Activated CD4-positive, alpha-beta memory T cell treated with anti-CD3 and anti-CD28 coated beads for 36 hours (primary cell): ENCODE measurements at regions of chr4 and their contacts with region 1.

Region 1: GRCh38 chr4:165190591-165191347 is 16.6 kb upstream of the KLHL2 start:
- DNase-seq: peak; percentile 63
- H3K4me3 Mint-ChIP-seq: no peak overlapping the region
- H3K27ac Mint-ChIP-seq: peak overlapping the region; percentile 58
- H3K4me1 Mint-ChIP-seq: peaks cover 26% of the 10 kb centered on the region
- H3K27me3 Mint-ChIP-seq: no peaks in the 10 kb centered on the region

Region 2: DNA sequence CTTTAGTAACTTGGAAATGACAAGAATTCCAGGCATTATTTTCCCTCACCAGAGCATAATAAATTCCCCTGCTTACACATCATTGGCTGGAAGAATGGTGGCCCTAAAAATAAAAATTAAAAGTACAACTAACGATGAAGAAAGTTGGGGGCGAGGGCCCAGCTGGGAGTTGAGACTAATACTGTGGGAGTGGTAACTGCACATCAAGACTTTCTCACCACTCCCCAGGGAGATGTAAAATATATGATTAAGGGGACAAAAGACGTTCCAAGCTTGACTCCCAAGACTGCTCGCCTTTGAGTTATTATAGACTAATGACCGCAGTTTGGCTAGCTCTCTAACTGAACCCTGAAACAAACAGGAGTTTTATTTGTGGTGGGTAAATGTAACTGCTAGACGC is 406.8 kb before region 1 on chr4:
- CTCF ChIA-PET with region 1: no interaction called
- POLR2A ChIA-PET with region 1: no interaction called
- intact Hi-C with region 1: no loop called
- DNase-seq: no peak
- H3K4me3 Mint-ChIP-seq: no peak overlapping the region
- H3K27ac Mint-ChIP-seq: no peak overlapping the region
- H3K4me1 Mint-ChIP-seq: no peaks in the 10 kb centered on the region
- H3K27me3 Mint-ChIP-seq: no peaks in the 10 kb centered on the region

Region 3: GRCh38 chr4:165152527-165152926 is 38.2 kb before region 1 on chr4:
- CTCF ChIA-PET with region 1: no interaction called
- POLR2A ChIA-PET with region 1: no interaction called
- intact Hi-C with region 1: no loop called
- DNase-seq: no peak
- H3K4me3 Mint-ChIP-seq: no peak overlapping the region
- H3K27ac Mint-ChIP-seq: no peak overlapping the region
- H3K4me1 Mint-ChIP-seq: no peaks in the 10 kb centered on the region
- H3K27me3 Mint-ChIP-seq: peaks cover 26% of the 10 kb centered on the region

Region 4: DNA sequence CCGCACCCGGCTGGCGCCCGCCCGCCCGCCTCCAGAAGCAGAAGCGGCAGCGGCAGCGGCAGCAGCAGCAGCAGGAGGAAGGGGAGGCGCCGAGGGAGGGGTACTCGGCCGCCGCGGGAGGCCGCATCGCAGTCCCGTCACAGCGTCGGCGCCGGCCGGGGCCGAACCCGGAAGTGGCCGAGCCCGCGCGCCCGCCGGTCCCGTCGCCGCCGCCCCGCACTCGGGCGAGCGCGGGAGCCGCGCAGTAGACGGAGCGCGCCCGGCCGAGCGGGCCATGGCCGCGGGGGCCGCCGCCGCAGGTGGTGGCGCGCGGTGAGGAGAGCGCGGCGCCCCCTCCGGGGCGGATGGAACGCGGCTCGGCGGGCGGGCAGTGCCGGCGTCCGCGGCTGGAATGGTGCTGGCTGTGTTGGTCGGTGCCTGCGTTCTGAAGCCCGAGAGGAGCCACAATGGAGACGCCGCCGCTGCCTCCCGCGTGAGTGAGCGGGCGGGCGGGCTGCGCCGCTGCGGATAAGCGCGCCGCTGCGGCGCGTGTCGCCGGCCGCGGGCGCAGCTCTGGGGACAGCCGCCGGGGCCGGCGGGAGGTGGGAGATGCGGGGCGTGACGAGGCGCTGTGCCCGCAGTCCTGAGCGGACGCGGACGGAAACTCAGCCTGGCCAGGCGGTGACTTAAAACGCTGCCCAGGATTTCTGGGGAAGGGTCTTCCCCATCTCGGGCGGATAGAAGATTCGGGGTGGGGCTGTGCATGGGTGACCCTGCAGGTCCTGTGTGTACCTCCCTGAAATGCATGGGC is 16.9 kb after region 1 on chr4 and contains the start of gene KLHL2:
- CTCF ChIA-PET with region 1: no interaction called
- POLR2A ChIA-PET with region 1: interaction called, 7 read pairs
- intact Hi-C with region 1: loop called (anchors 1 kb)
- DNase-seq: peak; percentile 74
- H3K4me3 Mint-ChIP-seq: peak within 1 kb of the TSS; percentile 88
- H3K27ac Mint-ChIP-seq: peak within 1 kb of the TSS; percentile 86
- H3K4me1 Mint-ChIP-seq: peaks cover 65% of the 10 kb centered on the region
- H3K27me3 Mint-ChIP-seq: no peaks in the 10 kb centered on the region
- total RNA-seq, gene KLHL2: 25.0 to 26.0 TPM

Region 5: DNA sequence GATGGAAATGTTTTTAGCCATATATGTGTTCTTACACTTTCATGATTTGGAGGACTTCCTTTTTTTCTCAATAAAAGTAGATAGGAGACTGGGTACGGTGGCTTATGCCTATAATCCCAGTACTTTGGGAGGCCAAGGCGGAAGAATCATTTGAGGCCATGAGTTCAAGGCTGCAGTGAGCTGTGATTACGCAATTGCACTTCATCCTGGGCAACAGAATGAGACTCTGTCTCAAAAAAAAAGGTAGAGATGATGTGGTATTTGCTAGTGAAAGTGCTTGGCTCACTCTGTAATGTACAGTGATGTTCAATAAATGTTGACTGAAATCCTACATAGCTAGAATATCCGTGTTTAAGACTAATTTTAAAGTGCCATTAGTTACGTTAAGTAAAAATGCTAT is 44.0 kb after region 1 on chr4:
- CTCF ChIA-PET with region 1: no interaction called
- POLR2A ChIA-PET with region 1: no interaction called
- intact Hi-C with region 1: loop called (anchors 5 kb)
- DNase-seq: no peak
- H3K4me3 Mint-ChIP-seq: no peak overlapping the region
- H3K27ac Mint-ChIP-seq: no peak overlapping the region
- H3K4me1 Mint-ChIP-seq: peaks cover 19% of the 10 kb centered on the region
- H3K27me3 Mint-ChIP-seq: no peaks in the 10 kb centered on the region

Region 6: DNA sequence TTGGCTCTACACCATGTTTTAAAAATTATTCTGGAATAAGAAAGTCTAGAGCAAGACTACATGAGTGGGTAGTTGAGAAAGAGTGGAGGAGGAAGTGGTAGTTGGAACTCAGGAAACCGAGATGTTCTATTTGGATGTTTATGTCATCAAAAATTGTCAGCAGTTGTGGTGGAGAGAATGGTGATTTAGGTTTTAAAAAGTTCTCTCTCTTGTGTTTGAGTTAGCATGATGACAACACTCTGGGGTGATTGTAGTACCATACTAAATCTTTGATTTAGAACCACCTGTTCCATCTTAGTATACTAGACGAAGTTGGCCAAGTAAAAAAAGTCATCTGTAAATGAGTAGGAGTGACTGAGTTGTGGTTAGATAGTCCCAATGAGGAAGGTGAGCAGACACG is 57.3 kb after region 1 on chr4:
- CTCF ChIA-PET with region 1: no interaction called
- POLR2A ChIA-PET with region 1: no interaction called
- intact Hi-C with region 1: loop called (anchors 5 kb)
- DNase-seq: no peak
- H3K4me3 Mint-ChIP-seq: no peak overlapping the region
- H3K27ac Mint-ChIP-seq: no peak overlapping the region
- H3K4me1 Mint-ChIP-seq: peaks cover 4% of the 10 kb centered on the region
- H3K27me3 Mint-ChIP-seq: no peaks in the 10 kb centered on the region

Region 7: GRCh38 chr4:165319030-165319429 is 128.3 kb after region 1 on chr4:
- CTCF ChIA-PET with region 1: no interaction called
- POLR2A ChIA-PET with region 1: no interaction called
- intact Hi-C with region 1: no loop called
- DNase-seq: no peak
- H3K4me3 Mint-ChIP-seq: no peak overlapping the region
- H3K27ac Mint-ChIP-seq: no peak overlapping the region
- H3K4me1 Mint-ChIP-seq: no peaks in the 10 kb centered on the region
- H3K27me3 Mint-ChIP-seq: no peaks in the 10 kb centered on the region

Region 8: GRCh38 chr4:165355900-165356300 is 165.1 kb after region 1 on chr4:
- CTCF ChIA-PET with region 1: no interaction called
- POLR2A ChIA-PET with region 1: no interaction called
- intact Hi-C with region 1: no loop called
- DNase-seq: peak; percentile 21
- H3K4me3 Mint-ChIP-seq: no peak overlapping the region
- H3K27ac Mint-ChIP-seq: no peak overlapping the region
- H3K4me1 Mint-ChIP-seq: no peaks in the 10 kb centered on the region
- H3K27me3 Mint-ChIP-seq: peaks cover 38% of the 10 kb centered on the region